ENCODE measurements at regions of chr5 and their contacts with region 1.

Region 1: GRCh38 chr5:177523711-177524538 is 7.2 kb upstream of the DDX41 start:
- DNase-seq: no peak
- ATAC-seq: no peak
- H3K4me3 Mint-ChIP-seq: no peak overlapping the region
- H3K27ac Mint-ChIP-seq: no peak overlapping the region
- H3K4me1 Mint-ChIP-seq: peaks cover 20% of the 10 kb centered on the region
- H3K27me3 Mint-ChIP-seq: no peaks in the 10 kb centered on the region

Region 2: DNA sequence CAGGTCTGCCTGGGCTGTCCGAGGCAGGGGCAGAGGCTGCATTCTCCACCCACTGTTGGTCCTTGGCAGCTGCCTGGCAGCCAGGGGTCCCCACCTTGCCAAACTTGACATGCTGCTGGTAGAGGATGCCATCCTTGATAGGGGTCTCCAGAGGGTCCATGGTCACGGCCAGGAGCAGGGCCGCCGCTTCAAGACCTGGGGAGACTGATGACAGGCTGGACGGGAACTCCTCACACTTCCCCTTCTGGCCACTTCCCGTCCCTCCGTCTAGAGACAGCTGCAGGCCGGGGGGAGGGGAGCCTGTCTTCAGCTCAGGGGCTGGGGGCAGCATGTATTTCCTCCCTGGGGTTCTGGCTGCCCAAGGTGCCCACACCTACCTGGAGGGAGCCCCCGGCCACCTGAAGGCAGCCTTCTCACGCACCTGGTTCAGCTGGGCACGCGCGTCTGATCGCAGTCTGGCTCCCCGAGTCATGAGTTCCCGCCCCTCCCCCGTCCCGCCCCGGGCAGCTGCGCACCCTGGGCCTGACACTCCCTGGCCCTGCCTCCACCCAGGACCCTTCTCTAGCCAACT is 14.5 kb before region 1 on chr5 and contains the start of gene DOK3:
- CTCF ChIA-PET with region 1: no interaction called
- POLR2A ChIA-PET with region 1: interaction called, 12 read pairs
- intact Hi-C with region 1: no loop called
- DNase-seq: peak; percentile 43
- ATAC-seq: peak; percentile 20
- H3K4me3 Mint-ChIP-seq: no peak within 1 kb of the TSS
- H3K27ac Mint-ChIP-seq: no peak within 1 kb of the TSS
- H3K4me1 Mint-ChIP-seq: peaks cover 10% of the 10 kb centered on the region
- H3K27me3 Mint-ChIP-seq: no peaks in the 10 kb centered on the region
- total RNA-seq, gene DOK3: 4.2 to 4.8 TPM

Measured in activated CD4-positive, alpha-beta T cell treated with anti-CD3 and anti-CD28 coated beads for 36 hours (primary cell).